ENCODE measurements at regions of chr14 and their contacts with region 1.

Region 1: GRCh38 chr14:35292051-35292769 is at the start of gene PSMA6:
- DNase-seq: peak; percentile 98 to 100 (median 99)
- ATAC-seq: peak; percentile 97
- H3K4me3 ChIP-seq: peak within 1 kb of the TSS; percentile 79 to 85
- H3K4me3 Mint-ChIP-seq: peak within 1 kb of the TSS; percentile 98
- H3K27ac ChIP-seq: peak within 1 kb of the TSS; percentile 82 to 91
- H3K27ac Mint-ChIP-seq: peak within 1 kb of the TSS; percentile 98
- H3K4me1 ChIP-seq: peaks cover 31% of the 10 kb centered on the region
- H3K4me1 Mint-ChIP-seq: peaks cover 48% of the 10 kb centered on the region
- H3K27me3 ChIP-seq: no peaks in the 10 kb centered on the region
- H3K27me3 Mint-ChIP-seq: no peaks in the 10 kb centered on the region
- CTCF ChIP-seq: no peak
- total RNA-seq, gene PSMA6: 72.3 to 78.9 TPM

Region 2: DNA sequence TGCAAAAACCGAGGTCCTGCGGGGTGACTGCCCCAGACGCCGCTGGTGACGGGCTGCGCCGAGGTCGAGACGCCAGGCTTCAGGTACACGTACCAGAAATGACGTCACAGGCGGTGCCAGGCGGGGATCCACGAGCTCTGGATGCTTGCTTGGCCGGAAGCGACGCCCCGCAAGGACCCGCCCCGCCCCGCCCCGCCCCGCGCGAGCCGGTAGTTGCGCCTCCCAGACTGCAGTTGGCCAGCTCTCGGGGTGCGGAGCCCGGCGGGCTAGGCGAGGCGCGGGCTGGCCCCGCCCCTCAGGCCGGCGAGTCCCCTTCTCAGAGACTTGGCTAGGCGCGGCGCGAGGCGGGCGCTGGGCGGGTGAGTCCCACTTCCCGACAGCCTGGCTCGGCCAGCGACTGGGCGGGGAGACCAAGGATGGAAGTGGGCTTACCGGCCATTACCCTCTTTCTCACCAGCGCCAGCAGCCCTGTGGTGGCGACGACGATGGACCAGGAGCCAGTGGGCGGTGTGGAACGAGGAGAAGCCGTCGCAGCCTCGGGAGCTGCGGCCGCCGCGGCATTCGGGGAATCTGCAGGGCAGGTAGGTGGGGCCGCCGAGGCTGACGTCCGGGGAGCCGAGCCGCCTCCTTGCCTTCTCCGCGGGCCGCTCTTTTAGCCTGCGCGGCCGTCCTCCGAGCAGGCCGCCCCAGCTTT is 246.0 kb before region 1 on chr14 and contains the start of gene FAM177A1:
- CTCF ChIA-PET with region 1: no interaction called
- POLR2A ChIA-PET with region 1: interaction called, 6 read pairs
- intact Hi-C with region 1: loop called (anchors 1 to 5 kb)
- DNase-seq: peak; percentile 97 to 100 (median 99)
- ATAC-seq: peak; percentile 83
- H3K4me3 ChIP-seq: peak within 1 kb of the TSS; percentile 81 to 96
- H3K4me3 Mint-ChIP-seq: peak within 1 kb of the TSS; percentile 82
- H3K27ac ChIP-seq: peak within 1 kb of the TSS; percentile 96 to 100
- H3K27ac Mint-ChIP-seq: peak within 1 kb of the TSS; percentile 98
- H3K4me1 ChIP-seq: peaks cover 20% of the 10 kb centered on the region
- H3K4me1 Mint-ChIP-seq: peaks cover 28% of the 10 kb centered on the region
- H3K27me3 ChIP-seq: no peaks in the 10 kb centered on the region
- H3K27me3 Mint-ChIP-seq: no peaks in the 10 kb centered on the region
- CTCF ChIP-seq: no peak
- total RNA-seq, gene FAM177A1: 227 to 230 TPM

Region 3: DNA sequence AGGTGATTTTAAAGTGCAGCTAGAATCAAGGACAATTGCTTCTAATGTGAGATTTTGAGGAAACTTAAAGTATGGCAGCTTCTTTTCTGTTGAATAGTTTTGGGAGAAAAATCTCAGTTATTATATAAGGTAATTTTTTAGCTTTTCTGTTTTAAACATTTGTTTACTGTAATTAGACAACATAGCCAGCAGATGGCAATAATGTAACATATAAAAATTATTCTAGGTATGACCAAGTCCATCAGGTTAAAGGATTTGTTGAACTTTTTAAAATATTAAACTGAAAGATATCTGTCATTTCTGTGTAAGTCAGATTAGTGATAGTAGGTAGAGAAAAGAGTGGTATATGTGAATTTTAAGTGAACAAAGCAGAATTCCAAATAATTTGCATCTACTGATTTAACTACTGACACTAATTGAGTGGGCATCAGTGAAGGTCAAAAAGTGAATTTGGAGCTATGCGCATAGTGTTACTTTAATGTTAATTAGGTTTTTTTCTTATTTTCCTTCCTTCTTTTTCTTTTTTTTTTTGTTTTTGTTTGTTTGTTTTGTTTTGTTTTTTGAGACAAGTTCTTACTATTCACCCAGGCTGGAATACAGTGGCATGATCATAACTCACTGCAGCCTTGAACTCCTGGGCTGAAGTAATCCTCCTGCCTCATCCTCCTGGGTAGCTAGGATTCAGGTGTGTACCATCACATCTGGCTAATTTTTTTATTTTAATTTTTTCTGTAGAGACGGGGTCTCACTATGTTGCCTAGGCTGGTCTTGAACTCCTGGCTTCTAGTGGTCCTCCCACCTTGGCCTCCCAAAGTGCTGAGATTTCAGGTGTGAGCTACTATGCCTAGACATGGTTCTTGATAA is 151.3 kb before region 1 on chr14:
- CTCF ChIA-PET with region 1: interaction called, 10 read pairs
- POLR2A ChIA-PET with region 1: interaction called, 5 read pairs
- intact Hi-C with region 1: loop called in 1 of 2 experiments (anchors 5 kb)
- DNase-seq: peak in 2 of 9 experiments; percentile 40 to 44
- ATAC-seq: peak; percentile 67
- H3K4me3 ChIP-seq: no peak overlapping the region
- H3K4me3 Mint-ChIP-seq: no peak overlapping the region
- H3K27ac ChIP-seq: no peak overlapping the region
- H3K27ac Mint-ChIP-seq: peak overlapping the region; percentile 67
- H3K4me1 ChIP-seq: no peaks in the 10 kb centered on the region
- H3K4me1 Mint-ChIP-seq: peaks cover 19% of the 10 kb centered on the region
- H3K27me3 ChIP-seq: no peaks in the 10 kb centered on the region
- H3K27me3 Mint-ChIP-seq: no peaks in the 10 kb centered on the region
- CTCF ChIP-seq: peak; percentile 83

Region 4: GRCh38 chr14:35279369-35279768 is 12.8 kb before region 1 on chr14:
- CTCF ChIA-PET with region 1: no interaction called
- POLR2A ChIA-PET with region 1: interaction called, 11 read pairs
- intact Hi-C with region 1: no loop called
- DNase-seq: no peak
- ATAC-seq: no peak
- H3K4me3 ChIP-seq: no peak overlapping the region
- H3K4me3 Mint-ChIP-seq: no peak overlapping the region
- H3K27ac ChIP-seq: no peak overlapping the region
- H3K27ac Mint-ChIP-seq: no peak overlapping the region
- H3K4me1 ChIP-seq: no peaks in the 10 kb centered on the region
- H3K4me1 Mint-ChIP-seq: peaks cover 2% of the 10 kb centered on the region
- H3K27me3 ChIP-seq: no peaks in the 10 kb centered on the region
- H3K27me3 Mint-ChIP-seq: no peaks in the 10 kb centered on the region
- CTCF ChIP-seq: no peak

Region 5: DNA sequence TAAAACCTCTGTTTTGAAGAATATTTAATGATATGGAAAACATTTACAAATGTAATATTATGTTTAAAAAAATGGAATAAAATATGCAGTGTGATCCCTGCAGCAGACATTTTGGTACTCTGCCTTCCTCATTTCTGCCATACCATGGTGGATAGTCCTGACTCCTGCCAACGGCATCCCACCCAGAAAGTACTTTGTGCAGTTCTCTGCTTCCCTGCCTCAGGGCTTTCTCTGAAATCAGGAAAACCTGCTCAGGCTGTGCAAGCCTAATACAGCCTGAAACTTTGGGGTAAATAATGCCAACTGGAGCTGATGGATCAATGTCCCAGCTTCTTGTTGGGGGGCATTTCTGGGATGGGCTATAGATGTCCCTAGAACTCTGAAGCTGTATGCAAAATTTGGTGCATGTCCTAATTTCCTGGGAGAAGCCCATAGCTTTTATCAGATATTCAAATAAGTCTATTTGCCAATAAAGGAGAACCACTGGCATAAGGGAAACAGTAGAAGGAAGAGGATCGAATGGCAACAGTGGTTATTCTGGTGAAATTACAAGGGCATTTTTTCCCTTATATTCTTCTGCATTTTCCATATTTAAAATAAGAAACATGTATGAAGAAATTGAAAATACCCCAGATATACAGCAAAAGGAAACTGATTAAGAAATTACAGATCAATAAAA is 34.0 kb after region 1 on chr14:
- CTCF ChIA-PET with region 1: no interaction called
- POLR2A ChIA-PET with region 1: no interaction called
- intact Hi-C with region 1: no loop called
- DNase-seq: no peak
- ATAC-seq: no peak
- H3K4me3 ChIP-seq: no peak overlapping the region
- H3K4me3 Mint-ChIP-seq: no peak overlapping the region
- H3K27ac ChIP-seq: no peak overlapping the region
- H3K27ac Mint-ChIP-seq: no peak overlapping the region
- H3K4me1 ChIP-seq: no peaks in the 10 kb centered on the region
- H3K4me1 Mint-ChIP-seq: no peaks in the 10 kb centered on the region
- H3K27me3 ChIP-seq: no peaks in the 10 kb centered on the region
- H3K27me3 Mint-ChIP-seq: no peaks in the 10 kb centered on the region
- CTCF ChIP-seq: no peak

Region 6: DNA sequence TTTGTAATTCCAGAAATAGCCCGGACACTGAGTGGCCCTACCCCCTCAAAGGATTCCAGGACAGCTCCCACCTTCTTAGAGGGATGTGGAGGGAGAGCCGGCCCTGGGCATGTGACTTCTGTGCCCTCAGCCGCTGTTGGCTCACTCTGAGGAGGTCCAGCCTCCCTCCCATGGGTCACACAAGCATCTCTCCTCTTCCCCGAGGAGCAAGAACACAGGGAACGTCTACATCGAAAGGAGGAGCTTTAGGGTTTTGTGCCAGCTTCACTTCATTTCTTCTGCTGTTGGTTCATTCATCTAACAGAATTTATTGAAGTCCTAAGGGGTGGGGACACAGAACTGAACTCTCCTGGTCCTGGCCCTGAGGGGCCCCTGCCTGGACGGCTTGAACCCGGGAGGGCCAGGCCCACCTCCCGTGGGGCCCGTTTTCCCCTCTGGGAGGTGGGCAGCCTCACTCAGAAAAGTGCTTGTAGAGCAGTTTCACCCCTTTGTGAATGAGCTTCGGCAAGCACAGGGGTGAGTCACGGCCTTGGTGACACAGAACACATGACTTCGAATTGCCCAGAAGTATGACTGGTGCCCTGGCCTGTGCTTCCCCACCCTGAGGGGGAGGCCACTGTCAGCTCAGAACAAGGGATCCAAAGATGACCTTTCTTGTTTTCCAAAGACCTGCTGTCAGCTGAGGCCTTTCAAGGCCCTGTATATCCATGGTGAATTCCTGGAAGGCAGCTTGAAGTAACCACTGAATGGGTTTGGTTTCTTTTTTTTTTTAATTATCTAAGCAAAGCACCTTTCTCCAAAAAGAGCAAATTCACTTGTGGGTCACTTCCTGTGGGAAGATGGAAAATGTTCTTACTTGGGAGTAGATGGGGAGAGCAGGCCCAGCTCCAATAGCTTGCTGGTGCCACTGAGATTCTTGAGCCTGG is 73.2 kb after region 1 on chr14:
- CTCF ChIA-PET with region 1: interaction called, 3 read pairs
- POLR2A ChIA-PET with region 1: interaction called, 11 read pairs
- intact Hi-C with region 1: no loop called
- DNase-seq: peak in 7 of 9 experiments; percentile 32 to 56 (median 36)
- ATAC-seq: peak; percentile 39
- H3K4me3 ChIP-seq: no peak overlapping the region
- H3K4me3 Mint-ChIP-seq: peak overlapping the region; percentile 11
- H3K27ac ChIP-seq: no peak overlapping the region
- H3K27ac Mint-ChIP-seq: peak overlapping the region; percentile 45
- H3K4me1 ChIP-seq: peaks cover 54% of the 10 kb centered on the region
- H3K4me1 Mint-ChIP-seq: peaks cover 43% of the 10 kb centered on the region
- H3K27me3 ChIP-seq: no peaks in the 10 kb centered on the region
- H3K27me3 Mint-ChIP-seq: no peaks in the 10 kb centered on the region
- CTCF ChIP-seq: no peak

Region 7: GRCh38 chr14:36028218-36028617 is 736.0 kb after region 1 on chr14:
- CTCF ChIA-PET with region 1: no interaction called
- POLR2A ChIA-PET with region 1: no interaction called
- intact Hi-C with region 1: no loop called
- DNase-seq: peak in 1 of 9 experiments; percentile 8
- ATAC-seq: no peak
- H3K4me3 ChIP-seq: no peak overlapping the region
- H3K4me3 Mint-ChIP-seq: no peak overlapping the region
- H3K27ac ChIP-seq: no peak overlapping the region
- H3K27ac Mint-ChIP-seq: no peak overlapping the region
- H3K4me1 ChIP-seq: no peaks in the 10 kb centered on the region
- H3K4me1 Mint-ChIP-seq: no peaks in the 10 kb centered on the region
- H3K27me3 ChIP-seq: no peaks in the 10 kb centered on the region
- H3K27me3 Mint-ChIP-seq: peaks cover 8% of the 10 kb centered on the region
- CTCF ChIP-seq: no peak

Measured in CD8-positive, alpha-beta T cell (primary cell).